Activated T-helper 2 cell treated with anti-CD3 and anti-CD28 coated beads, Interferon-gamma antibody, Interleukin-2, Interleukin-4, amounts not matched to agents 10 μg/mL and 5 μg/mL and 100 μg/mL, durations not matched to agents 14 hours and 24 hours and 36 hours (primary cell): ENCODE measurements at regions of chr6 and their contacts with region 1.

Region 1: DNA sequence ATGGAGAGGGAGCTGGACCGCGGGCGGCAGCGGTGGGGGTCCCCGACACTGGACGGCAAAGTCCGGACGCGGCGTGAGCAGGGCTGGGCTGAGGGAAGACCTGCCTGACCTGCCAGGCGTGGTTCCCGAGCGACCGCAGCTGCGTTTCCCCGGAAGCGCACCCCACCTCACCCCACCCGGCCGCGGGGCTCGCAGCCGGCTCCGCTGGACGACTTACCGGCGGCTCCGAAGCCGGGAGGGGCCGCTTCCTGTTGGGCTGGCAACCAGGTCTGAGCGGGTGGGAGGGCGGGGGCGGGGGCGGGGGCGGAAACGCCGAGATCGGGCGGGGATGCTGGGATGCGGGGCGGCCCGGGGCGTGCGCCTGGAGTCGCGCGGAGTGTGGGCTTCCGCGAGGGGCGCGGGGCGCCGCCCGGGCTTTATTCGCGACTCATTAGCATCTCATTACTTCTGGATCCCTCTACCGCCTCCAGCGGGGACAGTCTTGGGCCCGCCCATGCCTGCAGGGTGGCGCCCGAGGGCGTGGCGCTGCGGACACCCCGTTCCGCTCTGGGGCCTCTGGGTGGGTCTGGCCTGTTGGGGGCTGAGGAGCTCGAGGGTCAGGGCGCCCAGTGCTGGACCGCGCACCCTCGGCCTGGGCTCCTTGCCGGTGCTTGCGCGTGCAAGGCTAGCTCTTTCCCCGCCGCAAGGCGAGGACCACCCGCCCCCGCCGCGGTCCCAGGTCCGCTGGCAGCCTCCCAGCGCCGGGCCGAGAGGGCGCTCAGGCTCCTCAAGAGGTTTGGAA is at the start of gene MICAL1:
- DNase-seq: peak; percentile 78
- H3K4me3 Mint-ChIP-seq: peak within 1 kb of the TSS; percentile 97
- H3K27ac Mint-ChIP-seq: peak within 1 kb of the TSS; percentile 94
- H3K4me1 Mint-ChIP-seq: peaks cover 60% of the 10 kb centered on the region
- H3K27me3 Mint-ChIP-seq: no peaks in the 10 kb centered on the region
- total RNA-seq, gene MICAL1: 47.8 and 51.8 TPM in 2 replicates

Region 2: GRCh38 chr6:109095027-109095834 is 360.5 kb before region 1 on chr6 and contains the start of gene CEP57L1:
- intact Hi-C with region 1: loop called (anchors 10 kb)
- DNase-seq: peak; percentile 92
- H3K4me3 Mint-ChIP-seq: peak within 1 kb of the TSS; percentile 93
- H3K27ac Mint-ChIP-seq: peak within 1 kb of the TSS; percentile 99
- H3K4me1 Mint-ChIP-seq: peaks cover 45% of the 10 kb centered on the region
- H3K27me3 Mint-ChIP-seq: no peaks in the 10 kb centered on the region
- total RNA-seq, gene CEP57L1: 18.2 and 25.4 TPM in 2 replicates

Region 3: DNA sequence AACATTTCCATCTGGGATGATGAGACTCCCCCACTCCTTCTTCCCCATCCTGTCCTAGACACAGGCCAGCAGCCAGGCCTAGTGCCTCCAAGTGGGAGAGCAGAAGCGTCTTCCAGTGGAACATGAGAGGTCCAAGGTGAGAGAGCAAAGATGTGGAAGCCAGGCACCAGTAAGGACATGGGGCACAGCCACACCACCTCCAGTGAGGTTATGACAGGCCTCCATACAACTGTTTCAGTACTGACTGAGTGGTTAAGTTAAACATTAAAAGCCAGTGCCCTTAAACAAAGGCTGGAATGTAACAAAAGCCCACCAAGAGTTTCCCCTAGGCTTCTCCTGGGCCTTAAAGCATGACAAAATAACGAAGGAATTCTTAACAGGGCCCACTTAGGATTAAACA is 22.0 kb after region 1 on chr6:
- intact Hi-C with region 1: loop called (anchors 1 kb)
- DNase-seq: no peak
- H3K4me3 Mint-ChIP-seq: peak overlapping the region; percentile 78
- H3K27ac Mint-ChIP-seq: peak overlapping the region; percentile 90
- H3K4me1 Mint-ChIP-seq: peaks cover 68% of the 10 kb centered on the region
- H3K27me3 Mint-ChIP-seq: no peaks in the 10 kb centered on the region

Region 4: GRCh38 chr6:109513571-109514071 is 57.9 kb after region 1 on chr6:
- intact Hi-C with region 1: loop called (anchors 10 kb)
- DNase-seq: no peak
- H3K4me3 Mint-ChIP-seq: no peak overlapping the region
- H3K27ac Mint-ChIP-seq: peak overlapping the region; percentile 71
- H3K4me1 Mint-ChIP-seq: peaks cover 41% of the 10 kb centered on the region
- H3K27me3 Mint-ChIP-seq: no peaks in the 10 kb centered on the region

Region 5: DNA sequence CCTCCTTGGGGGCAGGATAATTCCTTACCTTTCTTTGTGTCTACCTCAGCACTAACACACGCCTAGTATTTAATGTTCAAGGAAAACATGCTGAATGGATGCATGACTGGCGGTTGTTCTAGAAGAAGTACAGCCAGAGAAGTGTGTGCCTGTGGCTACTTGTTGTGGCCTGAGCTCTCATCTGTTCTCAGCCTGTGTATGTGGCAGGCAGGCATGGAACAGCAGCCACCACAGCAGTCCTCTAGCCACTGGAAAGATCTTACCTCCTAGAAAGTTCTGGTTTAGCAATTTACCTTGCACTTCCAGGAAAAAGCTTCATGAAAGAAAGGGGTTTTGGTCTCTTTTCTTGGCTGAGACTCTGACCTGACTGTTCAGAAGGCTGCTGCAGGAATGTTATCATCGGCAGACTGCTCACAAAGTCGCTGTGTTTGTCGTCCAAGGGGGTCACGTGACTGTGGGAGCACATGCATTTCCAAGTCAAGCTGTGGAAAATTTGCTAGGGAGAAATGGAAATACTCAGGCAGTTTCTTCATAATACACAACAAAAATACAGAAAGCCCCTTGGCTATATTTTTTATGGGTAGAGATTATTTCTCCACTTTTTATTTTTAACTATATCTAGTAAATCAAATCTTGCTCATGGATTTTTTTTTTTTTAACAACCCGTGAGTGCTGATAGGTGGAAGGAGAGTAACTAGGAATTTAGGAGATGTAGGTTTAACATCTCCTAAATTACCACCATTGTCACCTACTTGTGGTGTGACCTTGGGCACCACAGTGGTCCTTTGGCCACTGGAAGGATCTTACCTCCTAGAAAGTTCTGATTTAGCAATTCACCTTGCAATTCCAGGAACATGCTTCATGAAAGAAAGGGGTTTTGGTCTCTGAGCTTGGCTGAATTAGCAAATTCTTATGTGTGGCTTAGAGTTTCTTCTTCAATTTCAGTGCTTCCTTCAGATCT is 411.6 kb after region 1 on chr6:
- intact Hi-C with region 1: no loop called
- DNase-seq: no peak
- H3K4me3 Mint-ChIP-seq: no peak overlapping the region
- H3K27ac Mint-ChIP-seq: no peak overlapping the region
- H3K4me1 Mint-ChIP-seq: no peaks in the 10 kb centered on the region
- H3K27me3 Mint-ChIP-seq: peaks cover 2% of the 10 kb centered on the region

Region 6: GRCh38 chr6:110179401-110180227 is 723.9 kb after region 1 on chr6 and contains the start of gene WASF1:
- intact Hi-C with region 1: loop called (anchors 10 kb)
- DNase-seq: peak; percentile 85
- H3K4me3 Mint-ChIP-seq: peak within 1 kb of the TSS; percentile 78
- H3K27ac Mint-ChIP-seq: peak within 1 kb of the TSS; percentile 3
- H3K4me1 Mint-ChIP-seq: peaks cover 8% of the 10 kb centered on the region
- H3K27me3 Mint-ChIP-seq: peaks cover 19% of the 10 kb centered on the region
- total RNA-seq, gene WASF1: 2.3 TPM in 2 replicates